Heart right ventricle (tissue), 16 donors: ENCODE measurements at regions of chr3 and their contacts with region 1.

Region 1: DNA sequence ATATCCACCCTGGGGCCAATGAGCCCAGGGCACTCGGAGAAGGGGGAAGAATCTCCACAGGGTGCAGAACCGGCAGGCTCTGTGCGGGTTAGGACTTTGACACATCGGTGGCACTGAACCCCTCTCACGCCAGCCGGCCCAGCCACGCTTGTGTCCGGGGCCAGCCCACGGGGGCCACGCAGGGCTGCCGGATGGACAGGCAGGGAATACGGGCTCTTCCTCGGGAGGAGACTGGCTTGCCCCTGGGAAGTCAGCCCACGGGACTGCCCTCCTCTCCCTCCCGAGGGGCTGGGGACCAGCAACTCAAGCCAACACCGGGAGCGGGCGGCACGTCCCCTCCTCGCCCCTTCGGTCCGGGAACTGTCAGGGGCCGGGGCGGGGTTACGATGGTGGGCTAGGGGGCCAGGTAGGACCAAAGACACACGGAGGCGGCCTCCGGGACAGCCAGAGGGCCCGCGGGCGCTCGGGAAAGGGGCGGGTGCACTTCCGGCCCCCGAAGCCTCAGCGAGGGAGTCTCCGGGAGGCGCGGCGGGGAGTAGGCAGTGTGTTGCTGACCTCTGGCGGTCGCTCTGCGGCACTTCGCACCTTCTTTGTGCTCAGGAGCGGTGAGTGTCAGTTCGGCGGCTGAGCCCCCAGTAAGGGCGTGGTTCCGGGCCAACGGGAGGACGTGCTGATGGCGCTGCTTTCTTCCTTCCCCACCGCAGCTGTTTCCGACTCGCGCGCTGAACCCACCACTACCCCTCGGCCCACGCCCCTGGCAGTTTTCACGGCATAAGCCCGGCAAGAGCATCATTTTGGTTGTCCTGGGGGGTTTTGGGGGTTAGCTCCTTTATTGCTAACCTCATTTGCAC is 5.1 kb upstream of the CYP8B1 start:
- DNase-seq: peak; percentile 82 to 86
- ATAC-seq: peak; percentile 96 to 99 (median 98)
- H3K4me3 ChIP-seq: peak overlapping the region; percentile 39 to 82 (median 70)
- H3K27ac ChIP-seq: peak overlapping the region in 9 of 10 donors; percentile 24 to 80 (median 67)
- H3K4me1 ChIP-seq: peaks cover 0 to 13% (median 8%) of the 10 kb centered on the region in 9 donors
- H3K27me3 ChIP-seq: peaks cover 0 to 7% (median 0%) of the 10 kb centered on the region in 7 donors
- CTCF ChIP-seq: peak; percentile 84 to 98 (median 93)

Region 2: GRCh38 chr3:42831321-42831713 is 49.5 kb before region 1 on chr3:
- intact Hi-C with region 1: loop called in 9 of 10 experiments (anchors 1 to 5 kb)
- DNase-seq: peak; percentile 48 to 74
- ATAC-seq: peak; percentile 25 to 76 (median 66)
- H3K4me3 ChIP-seq: no peak overlapping the region
- H3K27ac ChIP-seq: no peak overlapping the region
- H3K4me1 ChIP-seq: peaks cover 0 to 6% (median 0%) of the 10 kb centered on the region in 9 donors
- H3K27me3 ChIP-seq: no peaks in the 10 kb centered on the region
- CTCF ChIP-seq: peak; percentile 44 to 80 (median 73)

Region 3: GRCh38 chr3:42839616-42840015 is 41.2 kb before region 1 on chr3:
- intact Hi-C with region 1: loop called in 3 of 10 experiments (anchors 5 kb)
- DNase-seq: peak in 1 of 2 donors; percentile 53
- ATAC-seq: peak; percentile 74 to 88 (median 80)
- H3K4me3 ChIP-seq: peak overlapping the region in 3 of 10 donors; percentile 8 to 19 (median 17)
- H3K27ac ChIP-seq: no peak overlapping the region
- H3K4me1 ChIP-seq: peaks cover 0 to 26% (median 11%) of the 10 kb centered on the region in 9 donors
- H3K27me3 ChIP-seq: no peaks in the 10 kb centered on the region
- CTCF ChIP-seq: peak; percentile 50 to 81 (median 71)